SK-N-SH (cell line): ENCODE measurements at regions of chr1 and their contacts with region 1.

Region 1: GRCh38 chr1:46527474-46528296 is 23.8 kb downstream of the KNCN start:
- DNase-seq: peak; percentile 90
- H3K4me3 ChIP-seq: no peak overlapping the region; a peak in 1 of 4 replicates
- H3K27ac ChIP-seq: no peak overlapping the region
- H3K4me1 ChIP-seq: peaks cover 0 to 4% of the 10 kb centered on the region in 2 experiments; a peak in 1 of 4 replicates
- H3K27me3 ChIP-seq: no peaks in the 10 kb centered on the region; the same call in 1 of the 2 replicates
- CTCF ChIP-seq: peak; percentile 93
- EP300 ChIP-seq: no peak
- RAD21 ChIP-seq: peak; percentile 98

Region 2: GRCh38 chr1:46406881-46407608 is 120.6 kb before region 1 on chr1:
- CTCF ChIA-PET with region 1: interaction called, 15 read pairs
- POLR2A ChIA-PET with region 1: no interaction called
- DNase-seq: peak; percentile 52
- H3K4me3 ChIP-seq: peak overlapping the region in 1 of 2 experiments; percentile 42; a peak in 1 of 4 replicates
- H3K27ac ChIP-seq: no peak overlapping the region
- H3K4me1 ChIP-seq: no peaks in the 10 kb centered on the region; a peak in 1 of 4 replicates
- H3K27me3 ChIP-seq: no peaks in the 10 kb centered on the region
- CTCF ChIP-seq: no peak
- EP300 ChIP-seq: no peak
- RAD21 ChIP-seq: no peak

Region 3: GRCh38 chr1:46477153-46477929 is 50.3 kb before region 1 on chr1:
- CTCF ChIA-PET with region 1: interaction called, 158 read pairs
- POLR2A ChIA-PET with region 1: no interaction called
- DNase-seq: peak; percentile 91
- H3K4me3 ChIP-seq: no peak overlapping the region; a peak in 1 of 4 replicates
- H3K27ac ChIP-seq: no peak overlapping the region
- H3K4me1 ChIP-seq: peaks cover 0 to 9% of the 10 kb centered on the region in 2 experiments; a peak in 1 of 4 replicates
- H3K27me3 ChIP-seq: no peaks in the 10 kb centered on the region
- CTCF ChIP-seq: peak; percentile 93
- EP300 ChIP-seq: no peak
- RAD21 ChIP-seq: peak; percentile 80

Region 4: GRCh38 chr1:46539972-46540371 is 12.3 kb after region 1 on chr1:
- CTCF ChIA-PET with region 1: interaction called, 53 read pairs
- POLR2A ChIA-PET with region 1: no interaction called
- DNase-seq: no peak
- H3K4me3 ChIP-seq: no peak overlapping the region
- H3K27ac ChIP-seq: no peak overlapping the region
- H3K4me1 ChIP-seq: no peaks in the 10 kb centered on the region; a peak in 1 of 4 replicates
- H3K27me3 ChIP-seq: peaks cover 16% of the 10 kb centered on the region; the same call in 1 of the 2 replicates
- CTCF ChIP-seq: no peak
- EP300 ChIP-seq: no peak
- RAD21 ChIP-seq: no peak

Region 5: DNA sequence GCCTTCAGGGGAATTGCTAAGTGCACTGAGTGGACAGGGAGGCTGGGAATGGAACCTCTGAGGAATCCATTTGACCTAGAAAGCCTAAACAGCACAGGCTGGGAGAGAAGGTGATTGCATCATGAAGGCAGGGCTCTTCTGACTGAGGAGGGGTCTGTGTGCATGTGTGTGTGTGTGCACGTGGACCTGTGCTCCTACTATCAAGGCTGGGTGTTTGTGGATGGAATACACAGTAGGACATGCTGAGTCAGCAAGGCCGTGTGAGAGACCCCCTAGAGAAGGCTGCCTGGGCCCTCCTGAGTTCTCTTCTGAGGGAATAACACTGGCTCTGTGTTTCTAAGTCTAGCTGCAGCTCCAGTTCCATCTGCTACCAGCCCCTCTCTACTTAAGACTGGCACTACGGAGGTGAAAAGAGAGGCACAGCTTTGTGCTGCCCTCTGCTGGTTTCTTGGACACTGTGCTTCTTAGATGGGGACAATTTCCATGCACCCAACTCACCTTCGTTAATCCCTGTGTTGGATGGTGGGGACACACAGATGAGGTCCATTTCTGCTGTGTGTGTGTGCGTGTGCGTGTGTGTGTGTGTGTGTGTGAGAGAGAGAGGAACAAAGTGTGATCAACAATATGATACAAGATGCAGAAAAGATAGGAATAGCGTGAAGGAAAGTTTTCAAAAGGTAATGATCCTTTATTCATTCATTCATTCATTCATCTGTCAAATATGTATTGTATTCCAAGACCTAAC is 197.5 kb after region 1 on chr1:
- CTCF ChIA-PET with region 1: interaction called, 22 read pairs
- POLR2A ChIA-PET with region 1: no interaction called
- DNase-seq: peak; percentile 65
- H3K4me3 ChIP-seq: no peak overlapping the region; a peak in 1 of 4 replicates
- H3K27ac ChIP-seq: no peak overlapping the region
- H3K4me1 ChIP-seq: no peaks in the 10 kb centered on the region; a peak in 1 of 4 replicates
- H3K27me3 ChIP-seq: no peaks in the 10 kb centered on the region; the same call in 1 of the 2 replicates
- CTCF ChIP-seq: peak; percentile 84
- EP300 ChIP-seq: no peak
- RAD21 ChIP-seq: peak; percentile 85